Breast epithelium (tissue), 4 donors: ENCODE measurements at regions of chr2 and their contacts with region 1.

Region 1: DNA sequence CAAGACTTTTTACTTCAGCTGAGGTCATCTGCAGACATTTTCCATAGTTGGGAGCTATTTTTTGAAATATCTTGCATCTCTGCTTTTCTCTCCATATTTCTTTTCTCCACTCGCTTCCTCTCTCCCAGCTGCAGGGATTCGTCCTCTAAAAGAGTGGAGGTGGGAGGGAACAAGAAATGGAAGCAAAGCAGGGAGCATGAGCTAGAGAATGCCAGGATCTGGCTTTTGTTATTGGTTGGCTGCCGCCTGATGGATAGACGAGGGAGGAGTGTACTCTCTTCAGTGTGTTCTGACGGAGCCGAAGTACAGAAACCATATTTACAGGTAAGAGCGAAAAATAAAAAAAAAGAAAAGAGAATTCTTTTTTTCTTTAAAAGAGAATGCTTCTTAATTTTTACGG is at the start of gene CSRNP3:
- DNase-seq: peak; percentile 51 to 66
- H3K4me3 ChIP-seq: peak within 1 kb of the TSS; percentile 27 to 60 (median 51)
- H3K27ac ChIP-seq: no peak within 1 kb of the TSS
- H3K4me1 ChIP-seq: no peaks in the 10 kb centered on the region
- H3K27me3 ChIP-seq: no peaks in the 10 kb centered on the region
- CTCF ChIP-seq: no peak
- POLR2A ChIP-seq: no peak
- total RNA-seq, gene CSRNP3: 1.4 to 10.0 (median 2.0) TPM

Region 2: DNA sequence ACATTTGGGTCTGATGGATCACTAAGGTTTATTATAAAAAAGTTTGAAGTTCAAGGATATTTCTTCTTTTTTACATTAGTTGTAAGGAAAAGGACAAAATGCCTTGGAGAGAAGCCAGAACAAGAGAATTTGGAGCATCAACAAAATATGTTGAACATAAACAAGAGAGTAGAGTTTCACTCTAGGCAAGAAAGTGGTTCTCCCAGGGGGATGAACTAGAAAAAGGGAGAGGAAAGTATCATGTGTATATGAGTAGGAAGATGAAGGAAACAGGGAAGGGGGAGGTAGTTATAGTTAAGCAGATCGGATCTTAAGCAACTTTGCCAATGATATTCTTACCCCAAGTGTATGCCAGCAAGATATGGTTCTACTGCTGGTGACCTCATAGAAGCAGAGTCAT is 388.5 kb after region 1 on chr2:
- intact Hi-C with region 1: loop called (anchors 5 kb)
- DNase-seq: no peak
- H3K4me3 ChIP-seq: no peak overlapping the region
- H3K27ac ChIP-seq: no peak overlapping the region
- H3K4me1 ChIP-seq: no peaks in the 10 kb centered on the region
- H3K27me3 ChIP-seq: no peaks in the 10 kb centered on the region
- CTCF ChIP-seq: no peak
- POLR2A ChIP-seq: no peak